ENCODE measurements at regions of chr6 and their contacts with region 1.

Region 1: DNA sequence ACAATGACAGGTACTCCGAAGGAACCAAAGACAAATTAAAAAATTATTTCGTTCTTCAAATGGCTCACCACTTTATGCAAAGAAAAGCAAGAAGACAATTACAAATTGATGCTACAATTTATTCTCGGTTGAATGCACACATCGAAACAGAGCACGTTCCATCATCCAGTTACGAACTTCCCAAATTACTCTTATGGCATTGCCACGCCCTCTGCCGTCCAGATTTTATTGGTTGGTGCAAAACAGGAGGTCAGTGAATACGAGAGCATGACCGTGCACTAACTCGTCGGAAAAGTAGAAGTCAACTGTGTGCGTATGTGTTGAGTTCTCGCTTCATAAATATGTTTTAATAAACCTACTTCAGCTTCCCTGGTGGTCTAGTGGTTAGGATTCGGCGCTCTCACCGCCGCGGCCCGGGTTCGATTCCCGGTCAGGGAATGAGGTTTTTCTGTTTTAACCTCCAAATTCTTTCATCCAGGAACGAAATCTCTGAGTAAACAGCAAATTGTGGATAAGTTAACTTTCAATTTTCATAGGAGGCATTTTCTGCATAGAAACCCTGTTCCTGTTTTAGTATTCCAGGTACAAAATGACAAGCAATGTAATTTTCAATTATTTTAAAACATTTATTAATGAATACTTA is 23.2 kb downstream of the ZNF311 start:
- DNase-seq: peak; percentile 85
- H3K4me3 ChIP-seq: peak overlapping the region; percentile 45
- H3K4me1 ChIP-seq: peaks cover 24% of the 10 kb centered on the region
- H3K27me3 ChIP-seq: no peaks in the 10 kb centered on the region

Region 2: GRCh38 chr6:28944412-28945006 is 37.4 kb before region 1 on chr6:
- in situ Hi-C with region 1: loop called (anchors 5 kb)
- DNase-seq: peak; percentile 71 to 82
- H3K4me3 ChIP-seq: peak overlapping the region; percentile 38
- H3K4me1 ChIP-seq: peaks cover 19% of the 10 kb centered on the region
- H3K27me3 ChIP-seq: no peaks in the 10 kb centered on the region